PC-3 (cell line): ENCODE measurements at regions of chr15 and their contacts with region 1.

Region 1: GRCh38 chr15:83747050-83747717 is 93.3 kb downstream of the ADAMTSL3 start:
- DNase-seq: peak; percentile 59
- ATAC-seq: peak; percentile 74
- H3K4me3 ChIP-seq: peak overlapping the region; percentile 39; the same call in 1 of the 2 replicates
- H3K27ac ChIP-seq: peak overlapping the region; percentile 98
- H3K4me1 ChIP-seq: peaks cover 21% of the 10 kb centered on the region
- H3K27me3 ChIP-seq: no peaks in the 10 kb centered on the region
- CTCF ChIP-seq: peak; percentile 62

Region 2: GRCh38 chr15:83571820-83572707 is 175.1 kb before region 1 on chr15:
- CTCF ChIA-PET with region 1: no interaction called
- POLR2A ChIA-PET with region 1: no interaction called
- intact Hi-C with region 1: loop called (anchors 2 kb)
- DNase-seq: peak; percentile 68
- ATAC-seq: no peak
- H3K4me3 ChIP-seq: no peak overlapping the region
- H3K27ac ChIP-seq: no peak overlapping the region
- H3K4me1 ChIP-seq: peaks cover 6% of the 10 kb centered on the region; the same call in 1 of the 2 replicates
- H3K27me3 ChIP-seq: no peaks in the 10 kb centered on the region
- CTCF ChIP-seq: peak; percentile 79

Region 3: DNA sequence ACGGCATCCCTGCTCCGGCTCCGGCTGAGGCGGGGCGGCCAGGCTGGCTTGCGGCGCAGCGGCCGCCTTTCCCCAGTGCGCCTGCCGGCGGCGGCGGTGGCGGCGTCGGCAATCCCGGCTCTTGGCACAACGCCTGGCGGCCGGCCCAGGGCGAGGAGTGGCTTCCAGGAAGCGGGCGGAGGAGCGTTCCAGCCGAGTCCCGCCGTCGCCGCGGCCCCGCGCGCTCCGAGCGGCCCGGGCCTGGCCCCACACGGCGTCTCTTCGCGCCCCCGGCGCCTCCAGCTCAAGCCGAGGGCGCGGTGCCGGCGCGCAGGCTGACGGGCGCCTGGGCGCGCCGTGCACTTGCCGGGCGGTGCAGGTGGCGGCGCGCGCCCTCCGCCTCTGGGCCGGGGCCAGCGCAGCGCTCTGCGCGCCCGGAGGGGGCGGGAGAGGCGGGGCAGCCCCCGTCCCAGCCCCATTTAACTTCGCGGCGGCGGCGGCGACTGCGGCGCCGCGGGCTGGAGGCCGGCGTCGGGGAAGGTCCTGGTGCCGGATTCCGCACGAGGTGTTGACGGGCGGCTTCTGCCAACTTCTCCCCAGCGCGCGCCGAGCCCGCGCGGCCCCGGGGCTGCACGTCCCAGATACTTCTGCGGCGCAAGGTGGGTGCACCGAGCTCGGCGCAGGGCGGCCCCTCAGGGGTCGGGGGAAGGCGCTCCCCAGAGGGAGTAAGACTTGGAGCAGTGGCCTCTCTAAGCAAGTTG is 93.4 kb before region 1 on chr15 and contains the start of gene ADAMTSL3:
- CTCF ChIA-PET with region 1: interaction called, 4 read pairs
- POLR2A ChIA-PET with region 1: no interaction called
- intact Hi-C with region 1: loop called (anchors 1 kb)
- DNase-seq: peak; percentile 74
- ATAC-seq: peak; percentile 61
- H3K4me3 ChIP-seq: peak within 1 kb of the TSS; percentile 84
- H3K27ac ChIP-seq: no peak within 1 kb of the TSS; the same call in 1 of the 2 replicates
- H3K4me1 ChIP-seq: peaks cover 45% of the 10 kb centered on the region
- H3K27me3 ChIP-seq: no peaks in the 10 kb centered on the region
- CTCF ChIP-seq: no peak
- total RNA-seq, gene ADAMTSL3: 7.9 and 10.9 TPM in 2 replicates

Region 4: DNA sequence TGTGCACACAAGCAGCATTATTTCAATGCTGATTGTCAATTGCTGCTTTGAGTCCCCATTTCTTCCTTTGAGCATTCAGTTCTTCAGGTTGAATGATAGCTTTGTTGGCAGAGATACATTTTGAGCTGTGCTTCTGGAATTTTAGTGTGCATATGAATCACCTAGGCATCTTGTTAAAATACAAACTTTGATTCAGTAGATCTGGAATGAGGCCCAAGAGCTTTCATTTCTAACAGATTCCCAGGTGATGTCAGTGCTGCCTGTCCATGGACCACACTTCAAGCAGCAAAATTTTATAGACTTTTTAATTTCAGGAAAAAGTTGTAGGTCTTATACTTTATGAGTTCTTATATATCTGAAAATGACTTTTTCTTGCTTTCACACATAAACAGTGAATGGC is 37.8 kb after region 1 on chr15:
- CTCF ChIA-PET with region 1: interaction called, 3 read pairs
- POLR2A ChIA-PET with region 1: no interaction called
- intact Hi-C with region 1: loop called (anchors 1 kb)
- DNase-seq: peak; percentile 94
- ATAC-seq: peak; percentile 88
- H3K4me3 ChIP-seq: no peak overlapping the region
- H3K27ac ChIP-seq: peak overlapping the region; percentile 79
- H3K4me1 ChIP-seq: peaks cover 34% of the 10 kb centered on the region
- H3K27me3 ChIP-seq: no peaks in the 10 kb centered on the region
- CTCF ChIP-seq: no peak